Right lobe of liver (tissue), 6 donors: ENCODE measurements at regions of chr10 and their contacts with region 1.

Region 1: DNA sequence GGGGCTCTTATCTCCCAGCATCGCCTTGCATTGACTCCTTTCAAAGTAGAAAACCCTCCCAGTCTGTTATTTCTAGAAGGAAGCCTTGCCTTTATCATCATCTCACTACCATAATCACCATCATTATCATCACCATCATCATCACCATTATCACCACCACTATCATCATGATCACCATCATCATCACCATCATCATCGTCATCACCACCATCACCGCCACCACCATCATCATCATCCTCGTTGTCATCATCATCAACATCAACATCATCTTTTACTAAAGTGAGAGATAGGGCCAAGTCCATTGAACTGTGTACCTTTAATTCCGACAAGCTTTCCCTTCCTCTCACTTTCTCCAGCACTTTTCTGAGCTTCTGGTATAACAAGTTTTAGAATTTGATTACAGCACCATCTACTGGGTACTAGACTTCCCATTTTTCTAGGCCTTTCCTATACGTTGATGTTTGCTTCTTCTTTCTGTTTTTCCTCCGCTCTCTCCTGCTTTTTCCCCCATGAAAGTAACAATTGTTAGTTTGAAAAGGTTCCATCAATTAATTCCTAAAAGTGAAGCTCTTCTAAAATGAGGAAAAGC is 226.4 kb downstream of the BUB3 start:
- DNase-seq: no peak
- ATAC-seq: peak; percentile 29 to 52 (median 44)
- H3K4me3 ChIP-seq: no peak overlapping the region
- H3K27ac ChIP-seq: no peak overlapping the region
- H3K4me1 ChIP-seq: peaks cover 0 to 15% (median 0%) of the 10 kb centered on the region in 4 donors
- H3K27me3 ChIP-seq: no peaks in the 10 kb centered on the region
- CTCF ChIP-seq: peak; percentile 35 to 51 (median 42)
- POLR2A ChIP-seq: no peak

Region 2: DNA sequence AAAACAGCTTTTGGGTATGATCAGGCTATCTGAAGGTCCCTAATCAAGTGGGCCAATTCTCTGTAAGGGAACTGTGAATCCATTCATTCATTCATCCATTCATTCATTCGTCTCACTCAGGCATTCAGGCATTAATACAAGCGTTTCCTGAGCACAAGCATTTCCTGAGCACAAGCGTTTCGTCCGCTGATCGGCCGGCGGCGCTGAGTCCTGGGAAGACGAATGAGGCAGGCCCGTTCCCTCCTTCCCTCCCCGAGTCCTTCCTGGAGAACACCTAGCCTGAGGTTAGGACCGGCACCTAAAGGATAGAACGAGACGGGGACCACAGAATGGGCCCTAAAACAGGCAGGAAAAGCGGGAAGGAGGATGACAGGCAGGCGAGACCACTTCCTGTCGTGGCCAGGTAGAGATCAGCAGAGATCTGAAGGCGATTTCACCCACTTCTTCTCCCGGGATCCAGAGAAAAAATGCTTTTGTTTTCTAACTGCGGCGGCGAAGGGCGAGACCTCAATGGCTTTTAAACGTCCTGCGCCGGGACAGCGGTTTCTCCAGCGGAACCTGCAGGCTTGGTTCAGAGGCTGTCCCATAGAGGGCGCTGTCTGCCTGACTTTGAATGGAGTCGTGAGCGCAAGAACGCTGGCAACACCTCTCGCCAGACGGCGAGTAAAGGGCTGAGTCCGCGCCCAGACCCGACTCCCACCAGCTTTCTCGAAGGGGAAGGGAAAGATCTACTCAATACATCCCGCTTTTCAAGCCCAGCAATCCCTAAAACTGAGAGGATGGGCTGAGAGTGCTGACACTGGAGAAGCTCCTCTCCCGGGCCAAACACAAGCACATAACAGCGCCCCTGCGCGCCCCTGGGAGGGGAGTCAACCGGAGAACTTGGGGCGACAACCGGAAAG is 247.8 kb before region 1 on chr10:
- intact Hi-C with region 1: loop called in 1 of 2 experiments (anchors 10 kb)
- DNase-seq: peak; percentile 85 to 86 (median 86)
- ATAC-seq: peak; percentile 86 to 95 (median 94)
- H3K4me3 ChIP-seq: no peak overlapping the region
- H3K27ac ChIP-seq: no peak overlapping the region
- H3K4me1 ChIP-seq: peaks cover 0 to 37% (median 7%) of the 10 kb centered on the region in 4 donors
- H3K27me3 ChIP-seq: peaks cover 17 to 39% of the 10 kb centered on the region in 2 donors
- CTCF ChIP-seq: peak; percentile 85 to 94 (median 92)
- POLR2A ChIP-seq: no peak

Region 3: GRCh38 chr10:123147635-123148413 is 232.8 kb before region 1 on chr10 and contains the start of gene HMX2:
- intact Hi-C with region 1: loop called in 1 of 2 experiments (anchors 10 kb)
- DNase-seq: no peak
- ATAC-seq: no peak
- H3K4me3 ChIP-seq: no peak within 1 kb of the TSS
- H3K27ac ChIP-seq: no peak within 1 kb of the TSS
- H3K4me1 ChIP-seq: peaks cover 0 to 37% (median 4%) of the 10 kb centered on the region in 4 donors
- H3K27me3 ChIP-seq: peaks cover 41 to 68% of the 10 kb centered on the region in 2 donors
- CTCF ChIP-seq: no peak
- POLR2A ChIP-seq: no peak
- total RNA-seq, gene HMX2: not detected

Region 4: GRCh38 chr10:123272171-123272570 is 108.4 kb before region 1 on chr10:
- intact Hi-C with region 1: no loop called
- DNase-seq: no peak
- ATAC-seq: peak in 1 of 4 donors; percentile 46
- H3K4me3 ChIP-seq: no peak overlapping the region
- H3K27ac ChIP-seq: no peak overlapping the region
- H3K4me1 ChIP-seq: no peaks in the 10 kb centered on the region
- H3K27me3 ChIP-seq: no peaks in the 10 kb centered on the region
- CTCF ChIP-seq: peak in 2 of 4 donors; percentile 14 to 19
- POLR2A ChIP-seq: no peak

Region 5: GRCh38 chr10:123522702-123523312 is 142.2 kb after region 1 on chr10:
- intact Hi-C with region 1: no loop called
- DNase-seq: no peak
- ATAC-seq: no peak
- H3K4me3 ChIP-seq: no peak overlapping the region
- H3K27ac ChIP-seq: no peak overlapping the region
- H3K4me1 ChIP-seq: no peaks in the 10 kb centered on the region
- H3K27me3 ChIP-seq: no peaks in the 10 kb centered on the region
- CTCF ChIP-seq: no peak
- POLR2A ChIP-seq: no peak